HEK293T (cell line): ENCODE measurements at regions of chr12 and their contacts with region 1.

Region 1: DNA sequence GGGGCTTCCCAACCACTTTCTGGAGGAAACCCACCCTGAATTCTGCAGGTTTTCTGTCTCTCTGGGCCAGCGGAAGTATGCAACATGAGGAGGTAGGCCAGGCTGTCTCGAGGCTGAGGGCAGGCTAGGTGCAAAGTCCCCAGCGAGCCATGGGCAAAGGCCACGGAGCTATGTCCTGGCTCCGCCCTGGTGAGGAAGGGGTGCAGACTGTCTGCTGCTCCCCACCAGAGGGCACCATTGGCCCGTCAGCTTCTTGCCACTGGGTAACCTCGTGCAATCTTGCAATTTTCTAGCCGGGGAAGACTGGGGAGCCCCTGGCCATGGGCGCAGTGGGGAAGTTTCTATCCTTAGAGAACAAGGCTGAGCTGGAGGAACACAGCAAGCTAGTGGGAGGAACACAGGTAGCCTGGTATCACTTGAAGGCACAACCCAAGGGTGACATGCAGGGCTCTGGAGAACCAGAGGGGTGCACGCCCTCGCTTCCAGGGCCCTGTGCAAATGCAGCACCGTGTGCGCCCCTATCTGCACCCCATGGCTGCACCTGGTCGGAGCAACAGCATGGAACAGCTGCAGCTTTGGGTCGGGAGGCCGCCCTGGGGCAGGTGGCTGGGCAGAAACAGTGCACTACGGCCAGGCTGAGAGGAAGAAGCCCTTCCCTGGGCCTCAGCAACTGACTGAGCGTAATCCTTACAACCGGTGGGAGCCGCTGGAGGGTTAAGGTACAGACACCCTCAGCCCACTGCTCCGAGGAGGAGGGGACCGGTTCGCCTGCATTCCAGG is 27.6 kb upstream of the RPLP0 start:
- DNase-seq: peak; percentile 80

Region 2: DNA sequence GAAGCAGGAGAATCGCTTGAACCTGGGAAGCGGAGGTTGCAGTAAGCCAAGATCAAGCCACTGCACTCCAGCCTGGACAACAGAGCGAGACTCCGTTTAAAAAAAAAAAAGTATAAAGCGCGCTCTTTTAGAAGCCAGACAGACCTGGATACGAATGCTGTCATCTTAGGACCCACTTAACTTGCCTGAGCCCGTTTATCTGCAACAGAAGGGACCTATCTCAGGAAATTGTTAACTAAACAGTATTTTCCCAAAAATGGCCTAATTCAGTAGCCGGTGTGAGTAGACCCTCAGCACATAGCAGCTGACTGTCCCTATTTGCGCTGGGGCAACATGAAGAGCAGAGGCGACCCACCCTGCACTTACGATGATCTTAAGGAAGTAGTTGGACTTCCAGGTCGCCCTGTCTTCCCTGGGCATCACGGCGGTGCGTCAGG is 28.1 kb before region 1 on chr12:
- CTCF ChIA-PET with region 1: interaction called, 15 read pairs
- POLR2A ChIA-PET with region 1: interaction called, 185 read pairs
- DNase-seq: no peak

Region 3: DNA sequence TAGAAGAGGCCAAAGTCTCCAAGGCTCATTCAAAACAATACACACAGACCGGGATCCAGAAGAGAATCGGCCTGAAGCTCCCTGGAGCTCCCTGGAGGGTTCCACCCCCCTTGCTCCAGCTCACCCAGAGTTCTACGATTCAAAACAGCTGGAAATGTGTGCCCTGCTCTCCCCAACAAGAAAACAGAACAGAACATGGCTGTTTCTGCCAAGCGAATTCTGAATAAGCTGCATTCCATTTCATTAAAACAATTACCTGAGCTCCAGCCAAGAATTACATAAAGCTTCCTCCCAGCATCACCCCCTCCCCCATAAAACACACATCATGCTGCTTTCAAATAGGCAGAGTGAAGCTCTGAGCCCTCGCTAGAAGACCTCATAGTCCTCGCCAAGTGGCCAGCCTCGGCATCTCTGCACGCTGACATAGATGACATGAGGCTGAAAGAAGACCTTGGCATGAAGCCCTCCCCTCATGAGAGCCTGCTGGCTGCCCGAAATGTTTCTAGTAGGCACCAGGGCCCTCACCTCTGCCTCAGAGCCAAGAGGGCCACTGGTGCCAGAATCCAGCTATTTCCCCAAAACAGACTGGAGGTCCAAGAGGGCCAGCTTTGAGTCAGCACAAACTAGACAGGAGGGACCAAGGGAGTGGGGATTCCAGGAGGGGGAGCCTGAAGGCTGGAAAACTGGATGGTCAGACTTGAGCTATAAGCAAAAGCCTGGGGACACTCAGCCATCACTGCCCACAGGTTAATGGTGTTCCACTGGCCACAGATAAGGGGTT is 28.8 kb after region 1 on chr12:
- CTCF ChIA-PET with region 1: interaction called, 222 read pairs
- POLR2A ChIA-PET with region 1: interaction called, 139 read pairs
- DNase-seq: no peak

Region 4: GRCh38 chr12:120286796-120287465 is 58.5 kb after region 1 on chr12:
- CTCF ChIA-PET with region 1: interaction called, 27 read pairs
- POLR2A ChIA-PET with region 1: interaction called, 269 read pairs
- DNase-seq: no peak